ENCODE measurements at regions of chr2 and their contacts with region 1.

Region 1: GRCh38 chr2:24313744-24314632 is 46.3 kb downstream of the ITSN2 start:
- DNase-seq: no peak
- H3K4me3 ChIP-seq: no peak overlapping the region
- H3K4me3 Mint-ChIP-seq: no peak overlapping the region
- H3K27ac ChIP-seq: peak overlapping the region in 1 of 2 donors; percentile 36
- H3K27ac Mint-ChIP-seq: peak overlapping the region in 2 of 7 donors; percentile 20 to 37
- H3K4me1 ChIP-seq: peaks cover 5 to 6% of the 10 kb centered on the region in 2 donors
- H3K4me1 Mint-ChIP-seq: peaks cover 15% of the 10 kb centered on the region
- H3K27me3 ChIP-seq: no peaks in the 10 kb centered on the region
- H3K27me3 Mint-ChIP-seq: no peaks in the 10 kb centered on the region
- CTCF ChIP-seq: no peak

Region 2: GRCh38 chr2:24382363-24383073 is 68.5 kb after region 1 on chr2:
- intact Hi-C with region 1: loop called in 1 of 2 experiments (anchors 5 kb)
- DNase-seq: peak; percentile 45 to 64 (median 58)
- H3K4me3 ChIP-seq: no peak overlapping the region
- H3K4me3 Mint-ChIP-seq: no peak overlapping the region
- H3K27ac ChIP-seq: no peak overlapping the region
- H3K27ac Mint-ChIP-seq: no peak overlapping the region
- H3K4me1 ChIP-seq: no peaks in the 10 kb centered on the region
- H3K4me1 Mint-ChIP-seq: peaks cover 2% of the 10 kb centered on the region
- H3K27me3 ChIP-seq: no peaks in the 10 kb centered on the region
- H3K27me3 Mint-ChIP-seq: peaks cover 0 to 2% (median 0%) of the 10 kb centered on the region in 3 donors
- CTCF ChIP-seq: peak; percentile 75

Measured in CD14-positive monocyte (primary cell).